ENCODE measurements at regions of chr1 and their contacts with region 1.

Region 1: DNA sequence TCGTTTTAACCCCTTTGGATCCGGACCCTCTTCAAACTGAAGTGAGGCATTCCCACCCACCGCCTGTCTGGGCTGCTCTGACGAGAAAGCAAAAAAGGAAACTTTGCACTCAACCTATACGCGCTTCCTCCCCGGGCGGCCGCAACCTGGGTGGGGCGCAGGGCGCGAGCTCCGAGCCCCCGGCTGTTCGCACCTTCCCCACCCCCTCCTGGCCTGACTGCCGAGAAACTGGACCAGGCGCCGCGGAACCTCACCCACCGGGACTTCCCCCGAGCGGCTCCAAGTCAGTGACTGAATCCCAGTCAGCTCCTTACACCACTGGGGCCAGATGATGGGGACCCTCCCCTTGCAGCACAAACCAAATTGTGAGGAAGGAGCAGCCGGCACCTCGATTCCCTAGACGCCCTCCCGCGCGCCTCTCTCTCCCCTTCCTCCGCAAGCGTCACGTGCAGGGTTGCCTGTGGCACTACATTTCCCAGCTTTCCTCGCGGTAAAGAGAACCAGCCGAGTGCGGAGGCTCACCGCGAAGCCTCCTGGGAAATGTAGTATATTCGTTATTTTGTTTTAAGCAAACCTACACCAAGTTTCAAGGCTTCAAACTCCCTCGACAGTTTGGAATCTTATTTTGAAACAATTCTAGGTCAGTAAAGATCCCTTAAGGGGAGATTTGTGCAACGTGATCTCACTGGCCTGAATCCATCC is at the start of gene RAB29:
- DNase-seq: peak; percentile 77
- H3K4me3 ChIP-seq: peak within 1 kb of the TSS; percentile 74 to 78 (median 75)
- H3K27ac ChIP-seq: peak within 1 kb of the TSS; percentile 57
- H3K4me1 ChIP-seq: peaks cover 8% of the 10 kb centered on the region
- H3K27me3 ChIP-seq: no peaks in the 10 kb centered on the region
- CTCF ChIP-seq: no peak
- total RNA-seq, gene RAB29: 38.4 to 41.2 TPM

Region 2: GRCh38 chr1:205668951-205669340 is 106.2 kb before region 1 on chr1:
- CTCF ChIA-PET with region 1: no interaction called
- dilution Hi-C with region 1: no loop called
- in situ Hi-C with region 1: no loop called
- intact Hi-C with region 1: loop called (anchors 5 kb)
- DNase-seq: no peak
- H3K4me3 ChIP-seq: no peak overlapping the region
- H3K27ac ChIP-seq: no peak overlapping the region
- H3K4me1 ChIP-seq: peaks cover 46% of the 10 kb centered on the region
- H3K27me3 ChIP-seq: no peaks in the 10 kb centered on the region
- CTCF ChIP-seq: peak in 1 of 2 donors; percentile 2

Region 3: DNA sequence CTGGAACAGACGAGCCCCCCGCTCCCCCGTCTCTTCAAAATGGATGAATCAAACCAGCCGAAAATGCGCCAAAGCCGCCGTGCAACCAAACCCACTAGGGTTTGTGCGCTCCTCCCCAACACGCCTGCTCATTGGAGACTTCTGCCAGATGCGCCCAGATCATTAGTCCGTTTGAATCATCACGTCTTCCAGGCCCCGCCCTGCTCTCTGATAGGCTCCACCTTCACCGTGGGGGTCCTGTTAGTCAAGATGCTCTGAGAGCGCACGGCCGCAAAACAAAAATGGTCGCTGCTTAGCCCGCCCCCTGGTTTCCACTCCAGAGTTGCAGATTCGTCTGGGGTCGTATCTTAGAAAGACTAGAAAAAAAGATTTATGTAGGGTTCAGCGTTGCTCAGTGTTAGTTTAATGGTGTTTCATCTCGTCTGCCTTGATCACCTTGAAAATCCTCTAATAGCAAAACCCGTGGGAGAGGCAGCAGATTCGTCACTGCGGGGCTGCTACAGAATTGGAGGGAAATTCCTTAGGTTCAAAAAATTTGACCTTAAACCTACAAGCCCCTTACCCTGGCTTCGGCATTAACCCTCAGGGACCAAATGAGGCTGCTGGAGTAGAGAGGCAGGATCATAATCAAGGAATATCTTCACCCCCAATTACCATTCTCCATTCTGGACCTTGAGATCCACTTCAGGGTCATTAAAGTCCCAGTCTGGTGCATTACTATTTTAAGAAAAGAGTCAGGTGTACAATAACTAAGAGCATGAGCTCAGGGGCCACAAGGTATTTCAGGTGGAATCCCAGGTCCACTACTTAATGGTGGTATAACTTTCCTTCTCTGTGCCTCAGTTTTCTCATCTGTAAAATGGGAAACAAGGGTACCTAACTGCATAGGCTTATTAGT is 24.8 kb before region 1 on chr1 and contains the start of gene NUCKS1:
- CTCF ChIA-PET with region 1: no interaction called
- dilution Hi-C with region 1: no loop called
- in situ Hi-C with region 1: no loop called
- intact Hi-C with region 1: loop called (anchors 2 kb)
- DNase-seq: peak; percentile 99
- H3K4me3 ChIP-seq: peak within 1 kb of the TSS; percentile 66 to 90 (median 74)
- H3K27ac ChIP-seq: peak within 1 kb of the TSS; percentile 87
- H3K4me1 ChIP-seq: peaks cover 16% of the 10 kb centered on the region
- H3K27me3 ChIP-seq: no peaks in the 10 kb centered on the region
- CTCF ChIP-seq: no peak
- total RNA-seq, gene NUCKS1: 94.5 to 160 TPM

Measured in mammary epithelial cell (primary cell).